Astrocyte of the cerebellum (primary cell): ENCODE measurements at regions of chr10 and their contacts with region 1.

Region 1: DNA sequence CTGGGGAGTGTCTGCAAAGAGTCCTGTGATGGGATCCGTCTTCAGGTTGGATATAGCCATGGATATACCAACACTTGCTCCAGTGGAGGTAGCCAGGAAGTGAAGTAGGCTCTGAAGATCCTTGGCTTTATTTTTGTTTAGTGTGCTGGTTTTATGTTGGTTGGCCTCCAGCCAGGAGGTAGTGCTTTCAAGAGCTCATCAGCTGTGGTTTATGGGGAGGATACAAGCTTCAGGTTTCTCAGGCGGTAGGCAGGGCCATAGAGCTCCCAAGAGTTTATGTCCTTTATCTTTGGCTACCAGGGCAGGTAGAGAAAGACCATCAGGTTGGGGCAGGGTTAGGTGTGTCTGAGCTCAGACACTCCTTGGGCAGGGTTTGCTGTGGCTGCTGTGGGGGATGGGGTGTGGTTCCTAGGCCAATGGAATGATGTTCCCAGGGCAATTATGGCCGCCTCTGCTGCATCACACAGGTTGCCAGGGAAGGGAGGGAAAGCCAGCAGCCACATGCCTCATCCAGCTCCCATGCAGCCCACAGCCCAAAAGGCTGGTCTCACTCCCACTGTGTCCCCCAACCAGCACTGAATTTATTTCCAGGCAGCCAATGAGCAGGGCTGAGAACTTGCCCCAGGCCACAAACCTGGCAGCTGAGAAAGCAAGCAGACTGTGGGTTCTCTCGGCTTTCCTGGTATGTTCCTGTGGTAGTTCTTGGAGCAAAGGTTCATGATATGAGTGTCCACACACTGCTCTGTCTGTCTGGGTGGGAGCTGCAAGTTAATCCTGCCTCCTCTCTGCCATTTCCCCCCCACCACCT is 67.0 kb upstream of the PRLHR start:
- DNase-seq: no peak
- H3K4me3 ChIP-seq: no peak overlapping the region
- CTCF ChIP-seq: no peak

Region 2: DNA sequence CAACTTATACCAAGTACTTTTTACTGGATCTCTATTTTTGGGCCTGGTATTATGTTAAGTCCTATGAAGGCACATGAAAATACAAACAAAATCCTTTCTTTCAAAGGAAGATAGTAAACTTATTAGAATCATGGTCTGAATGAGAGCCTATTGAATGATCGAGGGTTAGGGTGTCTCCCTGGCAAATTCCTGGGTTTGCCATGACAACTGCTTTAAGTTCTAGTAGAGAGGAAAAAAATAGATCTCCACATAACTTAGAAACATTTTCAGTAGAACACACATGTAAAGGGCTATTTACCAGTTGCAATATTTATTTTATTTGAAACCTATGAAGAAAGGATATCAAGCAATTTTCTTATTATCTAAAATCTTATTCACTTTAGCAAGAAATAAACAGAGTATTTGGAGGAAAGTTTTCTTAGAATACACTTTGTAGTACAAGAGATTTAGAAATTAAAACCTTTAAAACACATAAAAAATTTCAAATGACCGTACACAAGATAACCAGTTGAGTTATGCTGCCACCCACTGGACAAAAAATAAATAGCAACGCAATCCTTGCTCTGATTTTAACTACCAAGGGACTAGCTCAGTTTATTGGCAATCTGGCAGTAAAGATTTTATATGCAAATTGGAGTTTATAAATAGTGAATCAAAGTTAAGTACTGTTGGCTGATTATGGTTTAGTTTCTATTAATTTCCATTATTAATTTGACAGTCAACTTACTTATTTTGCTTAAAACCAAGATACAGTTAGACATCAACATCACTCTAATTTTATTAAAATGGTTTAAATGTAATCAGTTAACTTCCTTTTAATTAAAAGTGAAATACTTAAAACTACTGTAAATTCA is 58.5 kb after region 1 on chr10:
- in situ Hi-C with region 1: loop called (anchors 5 kb)
- DNase-seq: peak; percentile 44
- H3K4me3 ChIP-seq: no peak overlapping the region
- CTCF ChIP-seq: peak; percentile 53